Colonic mucosa (tissue), 4 donors: ENCODE measurements at regions of chr1 and their contacts with region 1.

Region 1: GRCh38 chr1:98940722-98941079 is 64.0 kb downstream of the PLPPR5 start:
- DNase-seq: no peak
- H3K4me3 ChIP-seq: no peak overlapping the region
- H3K27ac ChIP-seq: no peak overlapping the region
- H3K4me1 ChIP-seq: no peaks in the 10 kb centered on the region
- H3K27me3 ChIP-seq: no peaks in the 10 kb centered on the region
- CTCF ChIP-seq: no peak

Region 2: GRCh38 chr1:98794196-98794886 is 146.4 kb before region 1 on chr1:
- intact Hi-C with region 1: loop called (anchors 10 kb)
- DNase-seq: peak; percentile 52
- H3K4me3 ChIP-seq: no peak overlapping the region
- H3K27ac ChIP-seq: no peak overlapping the region
- H3K4me1 ChIP-seq: no peaks in the 10 kb centered on the region
- H3K27me3 ChIP-seq: no peaks in the 10 kb centered on the region
- CTCF ChIP-seq: peak; percentile 59